Caco-2 (cell line): ENCODE measurements at regions of chr4 and their contacts with region 1.

Region 1: GRCh38 chr4:73103799-73104503 is 34.4 kb upstream of the COX18 start:
- DNase-seq: peak; percentile 58 to 60
- H3K4me3 ChIP-seq: peak overlapping the region; percentile 29
- H3K4me3 Mint-ChIP-seq: peak overlapping the region; percentile 69
- H3K27ac Mint-ChIP-seq: peak overlapping the region; percentile 85
- H3K4me1 ChIP-seq: peaks cover 20% of the 10 kb centered on the region
- H3K4me1 Mint-ChIP-seq: peaks cover 24% of the 10 kb centered on the region
- H3K27me3 ChIP-seq: no peaks in the 10 kb centered on the region
- H3K27me3 Mint-ChIP-seq: no peaks in the 10 kb centered on the region
- CTCF ChIP-seq: no peak

Region 2: DNA sequence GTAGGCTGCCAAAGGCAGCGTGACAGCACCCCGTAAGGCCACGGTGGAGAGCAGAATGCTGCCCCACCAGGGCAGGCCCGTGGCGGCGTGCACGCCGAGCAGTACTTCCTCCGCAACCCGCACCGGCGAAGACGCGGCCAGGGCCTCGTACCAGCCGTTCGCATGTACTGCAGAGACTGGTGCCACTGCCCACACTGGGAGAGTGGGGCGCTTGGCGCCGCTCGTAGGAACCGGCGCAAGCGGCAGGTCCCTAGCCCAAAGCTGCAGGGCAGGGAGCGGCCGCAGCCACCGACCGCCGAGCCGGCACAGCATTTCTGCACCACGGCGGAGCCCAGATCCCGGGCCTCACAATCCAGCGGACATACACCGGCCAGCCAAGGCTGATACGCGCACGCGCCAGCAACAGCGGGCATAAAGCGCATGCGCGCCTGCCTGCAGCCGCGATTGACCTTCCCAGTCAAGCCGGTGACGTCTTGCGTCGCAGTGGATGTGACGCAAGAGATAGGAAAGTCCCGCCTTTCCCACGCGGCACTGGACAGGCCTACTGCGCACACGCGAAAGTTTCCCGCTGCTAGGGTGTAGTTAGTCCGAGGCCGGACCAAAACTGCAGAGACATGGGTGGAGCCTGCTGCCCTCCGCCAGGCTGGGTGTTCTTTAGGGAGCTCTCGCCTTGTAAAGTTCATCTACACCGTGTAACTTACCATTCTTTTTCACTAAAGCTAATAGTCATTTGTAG is 34.4 kb before region 1 on chr4 and contains the start of gene COX18:
- CTCF ChIA-PET with region 1: no interaction called
- POLR2A ChIA-PET with region 1: interaction called, 4 read pairs
- intact Hi-C with region 1: loop called (anchors 2 kb)
- DNase-seq: peak; percentile 96 to 97
- H3K4me3 ChIP-seq: peak within 1 kb of the TSS; percentile 52
- H3K4me3 Mint-ChIP-seq: peak within 1 kb of the TSS; percentile 94
- H3K27ac Mint-ChIP-seq: peak within 1 kb of the TSS; percentile 98
- H3K4me1 ChIP-seq: no peaks in the 10 kb centered on the region
- H3K4me1 Mint-ChIP-seq: no peaks in the 10 kb centered on the region
- H3K27me3 ChIP-seq: no peaks in the 10 kb centered on the region
- H3K27me3 Mint-ChIP-seq: no peaks in the 10 kb centered on the region
- CTCF ChIP-seq: no peak
- total RNA-seq, gene COX18: 11.6 and 12.2 TPM in 2 replicates

Region 3: DNA sequence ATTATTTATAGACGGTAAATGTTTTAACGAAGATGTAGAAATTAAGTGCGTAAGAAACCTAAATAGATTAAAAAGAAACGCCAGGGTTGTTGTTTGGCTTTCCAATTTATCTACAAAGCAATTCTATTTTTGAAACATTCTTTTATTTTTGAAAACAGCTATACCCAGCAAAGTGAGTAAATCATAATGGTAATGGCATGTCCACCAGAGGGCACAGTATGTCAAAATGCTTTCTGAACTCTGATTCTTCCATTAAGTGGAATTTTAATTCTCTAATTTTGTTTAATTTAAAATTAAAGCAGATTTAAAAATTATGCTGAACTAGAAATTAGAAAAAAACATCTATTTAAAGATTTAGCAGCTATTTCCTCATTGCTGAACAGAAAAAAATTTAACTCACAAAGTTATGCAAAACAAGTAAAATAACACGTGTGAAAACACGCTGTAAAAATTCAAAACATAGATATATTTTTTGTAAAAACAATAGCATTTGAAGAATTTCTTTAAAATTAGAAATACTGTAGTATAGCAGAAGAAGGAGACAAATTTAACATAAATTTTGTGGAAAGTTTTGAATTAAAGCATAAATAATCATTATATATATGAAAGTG is 489.8 kb after region 1 on chr4:
- CTCF ChIA-PET with region 1: no interaction called
- POLR2A ChIA-PET with region 1: no interaction called
- intact Hi-C with region 1: no loop called
- DNase-seq: peak in 1 of 2 experiments; percentile 26
- H3K4me3 ChIP-seq: no peak overlapping the region
- H3K4me3 Mint-ChIP-seq: no peak overlapping the region
- H3K27ac Mint-ChIP-seq: no peak overlapping the region
- H3K4me1 ChIP-seq: peaks cover 7% of the 10 kb centered on the region
- H3K4me1 Mint-ChIP-seq: peaks cover 1% of the 10 kb centered on the region
- H3K27me3 ChIP-seq: no peaks in the 10 kb centered on the region
- H3K27me3 Mint-ChIP-seq: no peaks in the 10 kb centered on the region
- CTCF ChIP-seq: peak; percentile 58 to 69